T-cell (primary cell): ENCODE measurements at regions of chrX and their contacts with region 1.

Region 1: GRCh38 chrX:118459494-118459893 is 36.1 kb upstream of the DOCK11 start:
- DNase-seq: peak in 23 of 35 experiments; percentile 0 to 58 (median 6)
- ATAC-seq: peak in 3 of 4 experiments; percentile 37 to 53 (median 53)
- H3K4me3 ChIP-seq: no peak overlapping the region
- H3K4me3 Mint-ChIP-seq: no peak overlapping the region
- H3K27ac ChIP-seq: no peak overlapping the region
- H3K27ac Mint-ChIP-seq: no peak overlapping the region
- H3K4me1 ChIP-seq: no peaks in the 10 kb centered on the region
- H3K4me1 Mint-ChIP-seq: peaks cover 0 to 4% (median 0%) of the 10 kb centered on the region in 3 donors
- H3K27me3 ChIP-seq: no peaks in the 10 kb centered on the region
- H3K27me3 Mint-ChIP-seq: peaks cover 0 to 8% of the 10 kb centered on the region in 2 donors

Region 2: DNA sequence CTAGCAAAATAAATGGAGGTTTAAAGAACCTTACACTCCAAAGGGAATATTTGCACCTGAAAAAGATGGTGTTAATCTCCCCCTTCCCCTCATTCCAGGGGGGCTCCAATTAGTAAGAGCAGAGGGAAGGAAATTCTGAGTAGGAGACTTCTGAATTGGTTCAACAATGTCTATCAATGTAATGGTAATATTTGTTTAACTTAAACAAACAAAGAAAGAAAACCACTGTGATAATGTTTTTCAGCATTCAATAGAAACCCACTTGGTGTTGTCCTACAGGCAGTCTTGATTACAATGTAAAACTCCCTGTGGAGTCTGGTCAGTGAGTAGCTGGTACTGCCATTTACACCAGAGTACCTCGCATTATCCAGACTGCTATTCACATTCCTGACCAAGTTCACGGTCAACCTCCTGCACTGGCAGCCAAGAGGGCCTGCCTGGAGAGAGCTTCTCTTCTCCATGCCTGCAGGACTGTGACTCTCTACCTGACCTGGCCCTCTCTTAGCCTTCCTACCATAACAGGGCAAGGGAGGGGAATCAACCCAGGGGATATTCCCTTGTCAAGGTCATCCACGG is 512.0 kb after region 1 on chrX:
- CTCF ChIA-PET with region 1: no interaction called
- POLR2A ChIA-PET with region 1: interaction called in 1 of 2 experiments, 11 read pairs
- DNase-seq: no peak
- ATAC-seq: no peak
- H3K4me3 ChIP-seq: no peak overlapping the region
- H3K4me3 Mint-ChIP-seq: no peak overlapping the region
- H3K27ac ChIP-seq: no peak overlapping the region
- H3K27ac Mint-ChIP-seq: no peak overlapping the region
- H3K4me1 ChIP-seq: peaks cover 0 to 25% of the 10 kb centered on the region in 2 experiments
- H3K4me1 Mint-ChIP-seq: peaks cover 3 to 17% (median 11%) of the 10 kb centered on the region in 3 donors
- H3K27me3 ChIP-seq: peaks cover 5 to 26% of the 10 kb centered on the region in 2 experiments
- H3K27me3 Mint-ChIP-seq: peaks cover 5 to 21% of the 10 kb centered on the region in 2 donors